Common myeloid progenitor, CD34-positive (primary cell): ENCODE measurements at regions of chr18 and their contacts with region 1.

Region 1: GRCh38 chr18:9792565-9793245 is 84.6 kb downstream of the RAB31 start:
- DNase-seq: peak; percentile 28 to 47 (median 38)
- H3K4me3 ChIP-seq: no peak overlapping the region
- H3K27ac ChIP-seq: no peak overlapping the region
- H3K4me1 ChIP-seq: no peaks in the 10 kb centered on the region
- H3K27me3 ChIP-seq: no peaks in the 10 kb centered on the region

Region 2: DNA sequence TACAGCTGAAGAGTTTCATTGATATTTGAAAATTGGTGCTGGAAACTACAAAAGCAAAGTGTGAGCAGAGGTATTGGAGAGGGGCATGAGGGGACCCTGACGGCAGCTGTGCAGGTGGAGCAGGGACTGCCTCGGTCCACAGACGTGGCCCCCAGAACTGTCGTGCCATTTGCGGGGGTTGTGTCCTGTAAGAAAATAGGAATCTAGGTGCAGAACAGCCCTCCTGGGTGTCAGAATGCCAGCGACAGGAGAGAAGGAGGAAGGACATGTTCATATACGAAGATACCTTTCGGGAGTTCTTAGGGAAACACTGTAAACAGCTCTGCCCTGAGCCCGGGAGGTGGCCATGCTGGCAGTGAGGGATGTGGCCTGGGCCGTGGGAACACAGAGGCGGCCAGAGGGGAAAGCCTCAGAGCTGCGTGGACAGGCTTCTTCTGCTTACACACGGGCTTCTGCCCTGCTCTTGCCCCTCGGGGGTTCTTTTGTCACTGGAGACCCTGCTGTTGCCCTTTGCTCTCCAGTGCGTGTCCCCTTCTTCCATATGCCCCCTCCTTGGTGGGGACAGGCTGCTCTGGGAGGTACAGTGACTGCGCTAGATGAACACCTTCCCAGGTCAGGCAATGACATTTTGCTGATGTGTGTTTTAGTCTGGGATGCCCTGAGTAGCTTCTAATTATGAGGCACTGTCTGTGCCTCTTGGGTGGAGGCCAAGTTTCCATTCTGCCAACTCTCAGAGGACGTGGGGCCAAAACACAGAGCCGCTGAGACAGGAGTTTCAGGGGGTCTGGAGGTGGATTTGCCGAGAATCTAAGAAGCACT is 11.2 kb after region 1 on chr18:
- CTCF ChIA-PET with region 1: interaction called, 11 read pairs
- POLR2A ChIA-PET with region 1: no interaction called
- DNase-seq: peak in 2 of 3 donors; percentile 18 to 33
- H3K4me3 ChIP-seq: no peak overlapping the region
- H3K27ac ChIP-seq: peak overlapping the region in 1 of 2 experiments; percentile 82
- H3K4me1 ChIP-seq: peaks cover 0 to 5% (median 4%) of the 10 kb centered on the region in 4 experiments
- H3K27me3 ChIP-seq: no peaks in the 10 kb centered on the region

Region 3: DNA sequence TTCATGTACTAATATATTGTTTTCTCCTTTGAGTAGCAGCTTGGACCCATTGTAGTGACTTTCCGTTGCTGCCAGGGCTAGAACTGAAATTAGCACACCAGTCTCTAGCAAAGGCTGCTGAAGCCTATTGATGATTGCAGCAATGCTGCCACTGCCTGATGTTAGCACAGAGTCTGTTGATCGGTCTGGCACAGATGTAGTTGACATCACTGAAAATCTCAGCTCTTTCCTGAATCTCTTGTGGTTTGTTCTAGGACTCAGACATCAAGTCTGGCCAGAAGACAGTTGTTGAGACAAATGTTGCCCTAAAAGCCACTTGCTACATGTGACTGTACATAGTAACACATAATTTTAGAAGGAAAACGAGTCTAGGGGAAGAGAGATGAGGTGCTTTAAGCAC is 168.3 kb after region 1 on chr18:
- CTCF ChIA-PET with region 1: no interaction called
- POLR2A ChIA-PET with region 1: no interaction called
- DNase-seq: peak in 2 of 3 donors; percentile 61 to 70
- H3K4me3 ChIP-seq: no peak overlapping the region
- H3K27ac ChIP-seq: no peak overlapping the region
- H3K4me1 ChIP-seq: peaks cover 0 to 9% (median 3%) of the 10 kb centered on the region in 4 experiments
- H3K27me3 ChIP-seq: peaks cover 0 to 23% (median 2%) of the 10 kb centered on the region in 5 experiments

Region 4: GRCh38 chr18:10140461-10141282 is 348.0 kb after region 1 on chr18:
- CTCF ChIA-PET with region 1: no interaction called
- POLR2A ChIA-PET with region 1: no interaction called
- DNase-seq: no peak
- H3K4me3 ChIP-seq: no peak overlapping the region
- H3K27ac ChIP-seq: no peak overlapping the region
- H3K4me1 ChIP-seq: peaks cover 0 to 4% (median 0%) of the 10 kb centered on the region in 4 experiments
- H3K27me3 ChIP-seq: no peaks in the 10 kb centered on the region